Tibial artery (tissue), 4 donors: ENCODE measurements at regions of chr6 and their contacts with region 1.

Region 1: DNA sequence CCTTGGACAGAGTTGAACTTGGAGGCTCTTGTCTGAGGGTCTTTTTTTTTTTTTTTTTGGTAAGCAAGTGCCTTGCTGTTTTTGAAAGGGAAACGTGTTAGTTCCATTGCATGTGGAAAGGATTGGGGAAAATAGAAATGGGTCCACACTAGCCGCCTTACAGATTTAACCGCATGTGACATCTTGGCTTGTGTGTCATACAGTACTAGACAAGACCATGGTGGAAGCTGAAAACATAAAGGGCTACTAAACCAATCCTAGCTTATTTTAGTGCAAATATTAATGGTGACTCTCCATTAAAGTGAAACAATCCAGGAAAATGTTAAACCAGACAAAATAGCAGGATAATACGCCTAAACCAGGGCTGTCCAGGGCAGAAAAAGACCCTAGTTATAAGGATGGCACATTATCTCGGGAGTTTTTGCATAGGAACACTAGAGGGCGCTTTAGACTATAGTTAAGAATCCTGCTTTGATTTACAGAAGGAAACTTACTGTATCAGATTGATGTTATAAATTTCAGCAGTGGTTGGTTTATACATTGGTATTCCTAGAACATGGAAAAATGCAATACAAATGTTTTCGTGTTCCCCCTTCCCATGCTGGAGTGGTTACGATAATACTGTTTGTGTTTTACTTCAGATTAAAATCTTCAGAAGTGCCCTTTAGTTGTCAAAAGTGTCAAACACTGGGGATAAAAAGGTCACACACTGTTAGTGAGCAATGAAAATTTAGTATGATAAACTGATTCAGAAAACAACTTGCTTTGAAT is 59.8 kb upstream of the DEK start:
- DNase-seq: no peak
- H3K4me3 ChIP-seq: no peak overlapping the region
- H3K27ac ChIP-seq: no peak overlapping the region
- H3K4me1 ChIP-seq: peaks cover 0 to 17% (median 6%) of the 10 kb centered on the region in 4 donors
- H3K27me3 ChIP-seq: no peaks in the 10 kb centered on the region
- CTCF ChIP-seq: peak; percentile 67 to 84

Region 2: GRCh38 chr6:18004256-18004985 is 319.7 kb before region 1 on chr6:
- intact Hi-C with region 1: no loop called
- DNase-seq: no peak
- H3K4me3 ChIP-seq: no peak overlapping the region
- H3K27ac ChIP-seq: peak overlapping the region in 1 of 2 donors; percentile 28
- H3K4me1 ChIP-seq: peaks cover 0 to 8% (median 0%) of the 10 kb centered on the region in 4 donors
- H3K27me3 ChIP-seq: no peaks in the 10 kb centered on the region
- CTCF ChIP-seq: no peak

Region 3: DNA sequence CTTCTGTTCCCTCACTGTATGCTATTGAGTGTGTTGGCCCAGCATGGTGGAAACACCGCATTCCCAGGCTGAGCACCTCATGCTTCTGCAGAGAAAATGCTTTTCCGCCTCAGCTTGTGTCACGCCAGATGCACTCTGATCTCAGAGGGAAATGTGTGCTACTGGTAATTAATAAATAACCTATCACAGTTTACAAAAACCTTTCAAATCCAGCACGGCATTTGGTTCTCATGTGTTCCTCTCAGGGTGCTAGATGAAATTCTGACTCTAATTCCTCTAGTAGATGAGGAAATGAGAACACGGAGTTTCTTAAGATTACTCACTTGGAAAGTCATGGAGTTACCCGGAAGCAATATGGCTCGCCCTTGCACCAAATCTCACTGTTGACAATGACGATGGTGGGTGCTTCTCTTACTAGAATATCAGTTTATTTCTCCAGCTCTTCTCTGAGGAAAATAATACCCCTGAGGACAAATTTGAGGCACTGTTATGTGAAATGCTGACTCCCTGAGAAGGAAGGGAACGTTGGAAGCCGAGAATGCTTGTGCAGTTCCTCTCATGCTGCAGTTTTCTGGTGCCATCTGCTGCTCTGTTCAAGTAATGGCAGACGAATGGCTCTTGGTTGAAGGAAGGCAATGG is 179.6 kb after region 1 on chr6:
- intact Hi-C with region 1: loop called (anchors 2 kb)
- DNase-seq: peak in 1 of 2 donors; percentile 62
- H3K4me3 ChIP-seq: peak overlapping the region; percentile 35 to 47
- H3K27ac ChIP-seq: no peak overlapping the region
- H3K4me1 ChIP-seq: peaks cover 0 to 6% (median 1%) of the 10 kb centered on the region in 4 donors
- H3K27me3 ChIP-seq: no peaks in the 10 kb centered on the region
- CTCF ChIP-seq: peak; percentile 88 to 94

Region 4: GRCh38 chr6:18816046-18816445 is 491.9 kb after region 1 on chr6:
- intact Hi-C with region 1: no loop called
- DNase-seq: no peak
- H3K4me3 ChIP-seq: no peak overlapping the region
- H3K27ac ChIP-seq: no peak overlapping the region
- H3K4me1 ChIP-seq: no peaks in the 10 kb centered on the region
- H3K27me3 ChIP-seq: no peaks in the 10 kb centered on the region
- CTCF ChIP-seq: no peak